ENCODE measurements at regions of chr10 and their contacts with region 1.

Region 1: DNA sequence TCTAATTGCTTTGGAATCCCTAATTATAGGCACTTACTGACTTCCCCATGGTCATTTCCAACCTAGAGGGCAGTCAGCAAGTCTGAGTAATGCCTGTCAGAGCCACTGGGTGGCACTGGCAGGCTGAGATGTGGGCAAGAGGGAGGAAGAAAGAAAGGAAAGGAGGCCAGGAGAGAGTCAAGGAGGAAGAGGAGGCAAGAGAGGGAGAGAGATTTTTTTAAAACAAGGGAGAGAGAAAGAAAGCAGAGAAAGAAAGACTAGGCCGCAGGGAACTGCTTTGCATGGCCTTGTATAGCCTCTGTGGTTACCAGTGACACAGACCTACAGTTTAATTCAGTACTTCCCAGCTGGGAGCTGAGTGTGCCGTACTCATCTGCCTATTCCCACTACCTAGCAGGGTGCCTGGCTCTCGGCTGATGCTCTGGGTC is 210.4 kb upstream of the ADO start:
- DNase-seq: peak; percentile 74
- ATAC-seq: peak; percentile 89
- H3K4me3 ChIP-seq: no peak overlapping the region
- H3K4me3 Mint-ChIP-seq: no peak overlapping the region
- H3K27ac ChIP-seq: no peak overlapping the region
- H3K27ac Mint-ChIP-seq: no peak overlapping the region
- H3K4me1 ChIP-seq: peaks cover 7 to 10% of the 10 kb centered on the region in 2 donors
- H3K4me1 Mint-ChIP-seq: peaks cover 7% of the 10 kb centered on the region
- H3K27me3 ChIP-seq: no peaks in the 10 kb centered on the region
- H3K27me3 Mint-ChIP-seq: no peaks in the 10 kb centered on the region
- CTCF ChIP-seq: peak; percentile 88

Region 2: DNA sequence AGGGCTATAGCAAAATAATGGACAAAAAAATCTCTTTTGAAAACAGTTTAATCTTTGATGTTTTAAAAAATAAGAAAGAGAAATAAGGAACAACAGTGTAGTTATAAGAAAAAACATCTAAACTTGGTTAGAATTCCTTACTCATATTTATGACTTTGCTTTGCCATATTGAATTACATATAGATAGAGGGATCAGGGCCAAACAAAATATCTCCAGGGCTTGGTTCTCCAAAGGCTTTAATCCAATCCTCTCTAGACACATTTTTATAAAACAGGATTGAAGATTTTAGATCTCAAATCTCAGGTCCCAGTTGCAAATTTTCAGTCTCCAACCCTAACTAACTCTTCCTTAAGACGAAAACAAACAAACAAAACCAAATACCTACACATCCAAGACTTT is 1577.5 kb before region 1 on chr10:
- CTCF ChIA-PET with region 1: no interaction called
- POLR2A ChIA-PET with region 1: no interaction called
- intact Hi-C with region 1: no loop called
- DNase-seq: no peak
- ATAC-seq: no peak
- H3K4me3 ChIP-seq: no peak overlapping the region
- H3K4me3 Mint-ChIP-seq: no peak overlapping the region
- H3K27ac ChIP-seq: no peak overlapping the region
- H3K27ac Mint-ChIP-seq: no peak overlapping the region
- H3K4me1 ChIP-seq: no peaks in the 10 kb centered on the region
- H3K4me1 Mint-ChIP-seq: no peaks in the 10 kb centered on the region
- H3K27me3 ChIP-seq: peaks cover 0 to 7% (median 0%) of the 10 kb centered on the region in 4 experiments
- H3K27me3 Mint-ChIP-seq: peaks cover 8% of the 10 kb centered on the region
- CTCF ChIP-seq: no peak

Region 3: GRCh38 chr10:62583876-62584615 is 10.1 kb before region 1 on chr10:
- CTCF ChIA-PET with region 1: interaction called, 10 read pairs
- POLR2A ChIA-PET with region 1: no interaction called
- intact Hi-C with region 1: no loop called
- DNase-seq: no peak
- ATAC-seq: no peak
- H3K4me3 ChIP-seq: no peak overlapping the region
- H3K4me3 Mint-ChIP-seq: no peak overlapping the region
- H3K27ac ChIP-seq: no peak overlapping the region
- H3K27ac Mint-ChIP-seq: no peak overlapping the region
- H3K4me1 ChIP-seq: no peaks in the 10 kb centered on the region
- H3K4me1 Mint-ChIP-seq: peaks cover 9% of the 10 kb centered on the region
- H3K27me3 ChIP-seq: no peaks in the 10 kb centered on the region
- H3K27me3 Mint-ChIP-seq: no peaks in the 10 kb centered on the region
- CTCF ChIP-seq: no peak

Region 4: DNA sequence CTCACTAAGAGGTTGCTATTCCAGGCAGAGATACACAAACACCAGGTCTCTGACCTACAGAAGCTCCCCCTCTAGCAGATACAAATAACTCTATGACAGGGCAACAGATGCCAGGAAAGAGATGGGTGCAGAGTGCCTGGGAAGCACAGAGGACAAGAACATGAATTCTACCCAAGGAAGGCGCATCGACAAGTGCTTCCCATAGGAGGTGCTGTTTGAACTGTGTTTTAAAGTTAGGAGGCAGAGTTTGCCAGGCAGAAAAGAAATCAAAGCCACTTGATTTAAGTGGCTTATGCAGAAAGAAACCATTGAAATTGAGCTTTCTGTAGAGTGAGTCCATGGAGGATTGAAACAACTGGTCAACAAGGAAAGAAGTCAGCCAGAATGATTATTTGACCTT is 257.3 kb after region 1 on chr10:
- CTCF ChIA-PET with region 1: no interaction called
- POLR2A ChIA-PET with region 1: no interaction called
- intact Hi-C with region 1: no loop called
- DNase-seq: no peak
- ATAC-seq: no peak
- H3K4me3 ChIP-seq: no peak overlapping the region
- H3K4me3 Mint-ChIP-seq: no peak overlapping the region
- H3K27ac ChIP-seq: no peak overlapping the region
- H3K27ac Mint-ChIP-seq: no peak overlapping the region
- H3K4me1 ChIP-seq: peaks cover 39 to 46% of the 10 kb centered on the region in 2 donors
- H3K4me1 Mint-ChIP-seq: peaks cover 37% of the 10 kb centered on the region
- H3K27me3 ChIP-seq: no peaks in the 10 kb centered on the region
- H3K27me3 Mint-ChIP-seq: no peaks in the 10 kb centered on the region
- CTCF ChIP-seq: peak; percentile 17

Region 5: GRCh38 chr10:63083904-63084689 is 490.0 kb after region 1 on chr10:
- CTCF ChIA-PET with region 1: interaction called, 41 read pairs
- POLR2A ChIA-PET with region 1: no interaction called
- intact Hi-C with region 1: loop called (anchors 1 kb)
- DNase-seq: peak; percentile 75
- ATAC-seq: peak; percentile 86
- H3K4me3 ChIP-seq: no peak overlapping the region
- H3K4me3 Mint-ChIP-seq: no peak overlapping the region
- H3K27ac ChIP-seq: no peak overlapping the region
- H3K27ac Mint-ChIP-seq: no peak overlapping the region
- H3K4me1 ChIP-seq: no peaks in the 10 kb centered on the region
- H3K4me1 Mint-ChIP-seq: no peaks in the 10 kb centered on the region
- H3K27me3 ChIP-seq: no peaks in the 10 kb centered on the region
- H3K27me3 Mint-ChIP-seq: peaks cover 10% of the 10 kb centered on the region
- CTCF ChIP-seq: peak; percentile 82